SK-N-SH (cell line): ENCODE measurements at regions of chr19 and their contacts with region 1.

Region 1: DNA sequence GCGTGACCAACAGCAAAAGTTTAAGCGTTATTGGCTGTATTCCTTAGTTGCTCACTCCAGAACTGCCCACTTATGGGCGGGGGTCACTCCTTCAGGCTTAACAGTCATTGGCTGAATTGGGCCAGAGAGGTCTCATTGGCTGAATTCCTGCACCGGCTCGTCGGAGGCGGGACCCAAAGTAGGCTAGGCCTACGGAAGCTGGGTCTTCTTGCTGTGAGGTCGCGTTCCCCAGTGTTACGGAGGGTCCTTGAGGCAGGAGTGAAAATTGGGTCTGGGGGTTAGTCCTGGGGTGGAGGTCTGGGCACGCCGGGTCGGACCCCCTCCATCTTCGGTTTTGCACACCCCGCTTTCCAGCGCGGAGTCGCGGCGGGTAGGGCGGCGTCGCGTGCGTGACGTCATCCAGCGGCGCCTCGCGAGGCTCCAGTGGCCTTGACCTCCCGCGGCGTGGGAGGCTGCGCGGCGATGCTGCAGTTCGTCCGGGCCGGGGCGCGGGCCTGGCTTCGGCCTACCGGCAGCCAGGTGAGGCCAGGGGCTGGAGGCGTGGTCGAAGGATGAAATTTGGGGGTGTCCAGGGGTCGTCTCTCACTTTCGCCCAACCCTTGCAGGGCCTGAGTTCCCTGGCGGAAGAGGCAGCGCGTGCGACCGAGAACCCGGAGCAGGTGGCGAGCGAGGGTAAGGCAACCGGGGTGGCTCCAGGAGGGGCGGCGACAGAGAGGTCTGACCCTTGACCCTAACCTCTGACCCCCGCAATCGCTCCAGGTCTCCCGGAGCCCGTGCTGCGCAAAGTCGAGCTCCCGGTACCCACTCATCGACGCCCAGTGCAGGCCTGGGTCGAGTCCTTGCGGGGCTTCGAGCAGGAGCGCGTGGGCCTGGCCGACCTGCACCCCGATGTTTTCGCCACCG is at the start of gene MRPL4:
- DNase-seq: peak; percentile 94
- H3K4me3 ChIP-seq: peak within 1 kb of the TSS; percentile 67 to 69
- H3K27ac ChIP-seq: peak within 1 kb of the TSS; percentile 63 to 83
- H3K4me1 ChIP-seq: peaks cover 0 to 5% of the 10 kb centered on the region in 2 experiments; a peak in 1 of 4 replicates
- H3K27me3 ChIP-seq: no peaks in the 10 kb centered on the region
- CTCF ChIP-seq: no peak
- EP300 ChIP-seq: no peak
- RAD21 ChIP-seq: no peak
- polyA plus RNA-seq, gene MRPL4: 76.0 and 110 TPM in 2 replicates

Region 2: GRCh38 chr19:9934132-9934950 is 317.7 kb before region 1 on chr19:
- CTCF ChIA-PET with region 1: interaction called, 13 read pairs
- POLR2A ChIA-PET with region 1: no interaction called
- DNase-seq: peak; percentile 92
- H3K4me3 ChIP-seq: peak overlapping the region in 1 of 2 experiments; percentile 30; a peak in 2 of 4 replicates
- H3K27ac ChIP-seq: no peak overlapping the region
- H3K4me1 ChIP-seq: peaks cover 5 to 17% of the 10 kb centered on the region in 2 experiments; a peak in 3 of 4 replicates
- H3K27me3 ChIP-seq: peaks cover 23% of the 10 kb centered on the region; the same call in 1 of the 2 replicates
- CTCF ChIP-seq: peak; percentile 95
- EP300 ChIP-seq: no peak
- RAD21 ChIP-seq: peak; percentile 86

Region 3: GRCh38 chr19:10095948-10096621 is 156.0 kb before region 1 on chr19:
- CTCF ChIA-PET with region 1: interaction called, 38 read pairs
- POLR2A ChIA-PET with region 1: no interaction called
- DNase-seq: peak; percentile 99
- H3K4me3 ChIP-seq: peak overlapping the region; percentile 35 to 52
- H3K27ac ChIP-seq: peak overlapping the region; percentile 48 to 70; a peak in 3 of 4 replicates
- H3K4me1 ChIP-seq: peaks cover 0 to 7% of the 10 kb centered on the region in 2 experiments; a peak in 1 of 4 replicates
- H3K27me3 ChIP-seq: no peaks in the 10 kb centered on the region
- CTCF ChIP-seq: no peak
- EP300 ChIP-seq: no peak
- RAD21 ChIP-seq: no peak

Region 4: DNA sequence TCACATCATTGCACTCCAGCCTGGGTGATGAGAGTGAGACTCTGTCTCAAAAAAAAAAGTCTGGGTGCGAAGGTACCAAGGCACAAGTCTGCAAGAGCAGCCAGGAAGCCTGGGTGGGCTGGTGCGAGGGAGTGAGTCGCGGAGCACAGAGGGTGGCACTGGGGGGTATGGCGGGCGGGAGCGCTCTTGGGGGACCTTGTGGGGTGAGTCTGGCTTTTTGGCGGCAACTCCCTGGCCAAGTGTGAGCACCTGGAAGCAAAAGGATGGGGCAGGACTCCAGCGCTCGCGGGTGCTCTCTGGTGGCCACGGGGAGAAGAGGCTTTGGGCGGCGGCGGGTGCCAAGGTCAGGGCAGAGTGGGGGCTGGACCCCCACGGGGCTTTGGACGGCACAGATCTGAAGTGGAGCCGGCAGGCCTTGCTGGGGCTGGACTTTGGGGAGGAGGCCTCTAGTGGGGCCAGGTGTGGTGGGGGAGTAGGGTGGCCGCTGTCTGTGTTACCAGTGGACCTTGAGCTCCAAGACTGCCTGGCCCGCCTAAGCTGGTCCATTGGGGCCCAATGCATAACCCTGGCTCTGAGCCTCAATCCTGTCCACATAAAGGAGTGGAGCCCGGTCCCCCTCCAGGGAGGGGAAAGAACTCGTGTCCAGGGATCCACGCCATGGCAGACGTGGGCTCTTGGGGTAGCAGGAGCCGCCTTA is 139.0 kb before region 1 on chr19:
- CTCF ChIA-PET with region 1: interaction called, 14 read pairs
- POLR2A ChIA-PET with region 1: interaction called, 7 read pairs
- DNase-seq: peak; percentile 75
- H3K4me3 ChIP-seq: no peak overlapping the region; a peak in 1 of 4 replicates
- H3K27ac ChIP-seq: no peak overlapping the region; a peak in 1 of 4 replicates
- H3K4me1 ChIP-seq: peaks cover 0 to 5% of the 10 kb centered on the region in 2 experiments; a peak in 1 of 4 replicates
- H3K27me3 ChIP-seq: no peaks in the 10 kb centered on the region
- CTCF ChIP-seq: peak; percentile 52
- EP300 ChIP-seq: no peak
- RAD21 ChIP-seq: 0 out of 2 replicates have a peak, but pooled peaks have one; percentile 15

Region 5: DNA sequence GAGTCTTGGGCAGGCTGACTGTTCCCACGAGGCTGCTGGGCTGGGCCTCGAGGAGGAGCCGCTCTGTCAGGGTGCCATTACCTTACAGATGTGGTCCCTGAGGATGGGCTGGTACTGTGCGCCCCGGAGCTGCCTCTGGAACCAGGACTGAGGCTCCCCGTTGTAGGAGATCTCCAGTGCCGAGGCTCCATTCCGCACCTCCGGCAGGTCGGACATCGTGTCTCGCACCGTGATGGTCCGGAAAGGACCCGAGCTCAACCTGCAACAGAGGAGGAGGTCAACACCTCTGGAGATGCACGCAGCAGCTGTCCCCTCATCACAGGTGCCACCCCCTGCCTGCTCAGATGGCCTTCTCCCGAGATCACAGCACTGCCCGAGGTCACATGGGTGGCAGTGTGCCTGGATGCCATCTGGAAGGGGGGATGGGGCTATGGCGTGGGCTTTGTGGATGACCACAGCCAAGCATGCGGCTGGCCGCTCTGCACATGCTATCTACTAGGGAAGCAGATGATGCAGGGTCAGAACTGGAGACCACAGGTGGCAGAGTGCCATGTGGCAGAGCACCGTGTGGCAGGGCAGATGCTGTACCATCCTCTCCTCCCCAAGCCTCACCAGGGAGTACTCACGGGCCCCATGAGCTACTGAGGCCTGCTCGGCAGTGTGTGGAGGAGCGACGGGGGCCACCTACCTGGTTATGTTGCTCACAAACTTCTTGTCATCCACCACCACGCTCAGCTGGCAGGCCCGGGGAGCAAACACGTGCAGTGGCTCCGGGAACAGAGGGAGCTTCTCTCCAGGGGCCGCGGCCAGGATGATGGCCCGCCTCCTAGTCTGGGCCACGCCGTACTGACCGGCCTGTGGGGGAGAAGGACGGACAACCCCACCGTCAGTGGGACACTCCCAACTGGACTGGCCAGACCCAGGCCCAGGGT is 114.0 kb before region 1 on chr19:
- CTCF ChIA-PET with region 1: interaction called, 13 read pairs
- POLR2A ChIA-PET with region 1: interaction called, 4 read pairs
- DNase-seq: peak; percentile 81
- H3K4me3 ChIP-seq: no peak overlapping the region
- H3K27ac ChIP-seq: peak overlapping the region in 1 of 2 experiments; percentile 99; a peak in 2 of 4 replicates
- H3K4me1 ChIP-seq: peaks cover 0 to 33% of the 10 kb centered on the region in 2 experiments; a peak in 1 of 4 replicates
- H3K27me3 ChIP-seq: no peaks in the 10 kb centered on the region
- CTCF ChIP-seq: no peak
- EP300 ChIP-seq: peak in 1 of 2 experiments; percentile 78; a peak in 2 of 4 replicates
- RAD21 ChIP-seq: no peak

Region 6: DNA sequence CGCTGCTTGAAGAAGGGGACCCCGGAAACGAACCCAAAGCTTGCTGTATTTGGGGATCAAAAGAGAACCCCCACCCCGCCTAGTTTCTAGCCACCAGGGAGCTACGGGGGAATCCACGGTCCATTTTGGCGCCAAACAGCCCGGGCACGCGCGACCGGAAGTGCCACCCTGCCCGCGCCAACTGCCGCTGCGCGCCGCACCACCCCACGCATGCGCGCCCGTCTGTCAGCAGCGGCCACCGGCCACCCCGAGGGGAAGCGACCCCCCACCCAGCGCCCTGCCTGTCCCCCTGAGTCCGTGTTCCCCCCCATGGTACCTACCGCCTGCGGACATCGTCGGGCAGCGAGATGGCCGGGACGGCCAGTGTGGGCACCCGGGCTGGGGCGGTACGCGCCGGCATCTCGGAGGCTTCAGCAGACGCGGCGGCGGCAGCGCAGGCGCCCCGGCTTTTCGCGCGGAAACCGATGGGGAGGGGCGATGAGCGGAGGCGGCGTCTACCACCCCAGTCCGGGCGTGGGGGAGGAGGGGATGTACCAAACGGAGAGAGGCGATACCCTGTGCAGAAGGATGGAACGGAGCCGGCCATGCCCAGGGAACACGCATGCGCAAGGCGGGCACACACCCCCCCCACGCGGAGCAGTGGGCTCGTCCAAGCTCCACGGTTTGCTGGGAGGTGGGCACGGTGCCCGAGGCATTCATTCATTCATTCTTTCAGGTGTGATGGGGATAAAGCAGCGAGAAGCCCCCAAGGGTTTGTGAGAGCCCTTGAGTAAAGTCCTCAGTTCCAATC is 57.3 kb before region 1 on chr19 and contains the start of gene DNMT1:
- CTCF ChIA-PET with region 1: interaction called, 13 read pairs
- POLR2A ChIA-PET with region 1: interaction called, 4 read pairs
- DNase-seq: peak; percentile 100
- H3K4me3 ChIP-seq: peak within 1 kb of the TSS; percentile 61 to 82
- H3K27ac ChIP-seq: peak within 1 kb of the TSS; percentile 71 to 80
- H3K4me1 ChIP-seq: peaks cover 7 to 15% of the 10 kb centered on the region in 2 experiments; a peak in 2 of 4 replicates
- H3K27me3 ChIP-seq: no peaks in the 10 kb centered on the region
- CTCF ChIP-seq: no peak
- EP300 ChIP-seq: peak in 1 of 2 experiments; percentile 70; a peak in 1 of 4 replicates
- RAD21 ChIP-seq: no peak
- polyA plus RNA-seq, gene DNMT1: 46.1 and 58.3 TPM in 2 replicates

Region 7: GRCh38 chr19:10238172-10238783 is 13.8 kb before region 1 on chr19:
- CTCF ChIA-PET with region 1: interaction called, 31 read pairs
- POLR2A ChIA-PET with region 1: no interaction called
- DNase-seq: no peak
- H3K4me3 ChIP-seq: no peak overlapping the region
- H3K27ac ChIP-seq: no peak overlapping the region
- H3K4me1 ChIP-seq: peaks cover 0 to 6% of the 10 kb centered on the region in 2 experiments; a peak in 1 of 4 replicates
- H3K27me3 ChIP-seq: no peaks in the 10 kb centered on the region
- CTCF ChIP-seq: no peak
- EP300 ChIP-seq: no peak
- RAD21 ChIP-seq: no peak

Region 8: GRCh38 chr19:10353793-10354391 is 101.8 kb after region 1 on chr19:
- CTCF ChIA-PET with region 1: no interaction called
- POLR2A ChIA-PET with region 1: no interaction called
- DNase-seq: peak; percentile 77
- H3K4me3 ChIP-seq: no peak overlapping the region
- H3K27ac ChIP-seq: no peak overlapping the region
- H3K4me1 ChIP-seq: no peaks in the 10 kb centered on the region
- H3K27me3 ChIP-seq: no peaks in the 10 kb centered on the region
- CTCF ChIP-seq: no peak
- EP300 ChIP-seq: no peak
- RAD21 ChIP-seq: no peak